Naive thymus-derived CD8-positive, alpha-beta T cell (primary cell): ENCODE measurements at regions of chr12 and their contacts with region 1.

Region 1: DNA sequence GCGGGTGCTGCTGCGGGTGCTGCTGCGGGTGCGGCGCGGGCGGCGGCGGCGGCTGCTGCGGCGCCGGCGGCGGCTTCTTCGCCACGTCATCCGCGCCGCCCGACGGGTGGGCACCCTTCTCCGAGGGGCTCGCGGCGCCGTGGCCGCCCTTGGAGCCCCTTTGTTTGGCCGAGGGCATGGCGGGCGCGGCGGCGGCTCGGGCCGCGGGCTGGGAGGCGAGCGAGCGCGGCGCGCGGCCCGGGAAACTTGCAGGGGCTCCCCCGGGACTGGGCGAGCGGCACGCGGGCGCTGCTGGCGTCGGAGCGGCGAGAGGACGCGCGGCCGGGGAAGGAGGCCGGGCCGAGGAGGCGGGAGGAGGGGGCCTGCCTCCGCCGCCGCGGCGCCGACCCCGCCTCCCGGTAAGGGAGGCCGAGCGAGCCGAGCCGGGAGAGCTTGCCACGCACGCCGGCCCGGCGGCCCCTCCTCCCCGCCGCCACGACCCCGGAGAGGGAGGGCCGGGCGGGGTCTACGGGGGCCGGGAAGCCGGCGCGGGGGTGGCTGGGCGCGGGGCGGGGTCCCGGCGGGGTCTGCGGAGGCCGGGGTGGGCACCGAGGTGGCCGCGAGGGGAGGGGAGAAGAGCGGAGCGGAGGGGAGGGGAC is at the start of gene CKAP4:
- DNase-seq: peak; percentile 38 to 76 (median 60)
- ATAC-seq: peak; percentile 50 to 60
- H3K4me3 Mint-ChIP-seq: peak within 1 kb of the TSS; percentile 75 to 91 (median 86)
- H3K27ac Mint-ChIP-seq: peak within 1 kb of the TSS; percentile 69 to 98 (median 95)
- H3K4me1 Mint-ChIP-seq: peaks cover 17 to 53% (median 43%) of the 10 kb centered on the region in 4 donors
- H3K27me3 Mint-ChIP-seq: no peaks in the 10 kb centered on the region
- polyA plus RNA-seq, gene CKAP4: 11.2 to 11.9 (median 11.2) TPM

Region 2: DNA sequence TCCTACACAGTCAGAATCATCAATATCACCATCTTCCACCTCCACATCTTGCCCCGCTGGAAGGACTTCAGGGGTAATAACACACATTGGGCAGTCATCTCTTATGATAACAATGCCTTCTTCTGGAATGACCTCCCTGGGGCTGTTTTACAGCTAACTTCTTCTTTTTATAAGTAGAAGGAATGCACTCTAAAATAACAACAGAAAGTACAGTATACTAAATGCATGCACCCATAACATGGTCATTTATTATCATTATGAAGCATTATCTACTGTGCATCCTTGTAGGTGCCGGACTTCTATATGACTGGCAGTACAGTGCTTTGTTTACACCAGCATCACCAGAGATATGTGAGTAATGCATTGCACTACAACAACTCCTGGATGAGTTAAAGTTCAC is 90.0 kb before region 1 on chr12:
- POLR2A ChIA-PET with region 1: no interaction called
- DNase-seq: no peak
- ATAC-seq: no peak
- H3K4me3 Mint-ChIP-seq: no peak overlapping the region
- H3K27ac Mint-ChIP-seq: no peak overlapping the region
- H3K4me1 Mint-ChIP-seq: no peaks in the 10 kb centered on the region
- H3K27me3 Mint-ChIP-seq: peaks cover 16 to 41% (median 36%) of the 10 kb centered on the region in 5 donors

Region 3: GRCh38 chr12:106282457-106283097 is 34.8 kb after region 1 on chr12:
- POLR2A ChIA-PET with region 1: interaction called, 18 read pairs
- DNase-seq: peak; percentile 10 to 76 (median 47)
- ATAC-seq: peak; percentile 77 to 79
- H3K4me3 Mint-ChIP-seq: no peak overlapping the region
- H3K27ac Mint-ChIP-seq: peak overlapping the region in 4 of 10 donors; percentile 0 to 84 (median 14)
- H3K4me1 Mint-ChIP-seq: peaks cover 0 to 18% (median 10%) of the 10 kb centered on the region in 4 donors
- H3K27me3 Mint-ChIP-seq: peaks cover 2 to 9% (median 6%) of the 10 kb centered on the region in 5 donors